Mammary epithelial cell (primary cell): ENCODE measurements at regions of chr17 and their contacts with region 1.

Region 1: GRCh38 chr17:82668631-82669099 is 20.4 kb upstream of the WDR45B start:
- DNase-seq: peak; percentile 37
- H3K4me3 ChIP-seq: no peak overlapping the region
- H3K27ac ChIP-seq: no peak overlapping the region
- H3K4me1 ChIP-seq: no peaks in the 10 kb centered on the region
- H3K27me3 ChIP-seq: no peaks in the 10 kb centered on the region
- CTCF ChIP-seq: peak; percentile 46 to 74

Region 2: GRCh38 chr17:82592767-82593589 is 75.7 kb before region 1 on chr17:
- CTCF ChIA-PET with region 1: no interaction called
- dilution Hi-C with region 1: no loop called
- in situ Hi-C with region 1: no loop called
- intact Hi-C with region 1: no loop called
- DNase-seq: peak; percentile 68
- H3K4me3 ChIP-seq: peak overlapping the region; percentile 57 to 64 (median 63)
- H3K27ac ChIP-seq: peak overlapping the region; percentile 11
- H3K4me1 ChIP-seq: peaks cover 16% of the 10 kb centered on the region
- H3K27me3 ChIP-seq: no peaks in the 10 kb centered on the region
- CTCF ChIP-seq: no peak

Region 3: GRCh38 chr17:82734987-82735866 is 66.6 kb after region 1 on chr17 and contains the start of gene FN3K:
- CTCF ChIA-PET with region 1: no interaction called
- dilution Hi-C with region 1: loop called (anchors 5 kb)
- in situ Hi-C with region 1: no loop called
- intact Hi-C with region 1: no loop called
- DNase-seq: peak; percentile 29
- H3K4me3 ChIP-seq: peak within 1 kb of the TSS; percentile 50 to 56 (median 52)
- H3K27ac ChIP-seq: no peak within 1 kb of the TSS
- H3K4me1 ChIP-seq: peaks cover 7% of the 10 kb centered on the region
- H3K27me3 ChIP-seq: no peaks in the 10 kb centered on the region
- CTCF ChIP-seq: no peak
- total RNA-seq, gene FN3K: 2.2 to 4.2 TPM

Region 4: GRCh38 chr17:82767041-82767754 is 98.5 kb after region 1 on chr17:
- CTCF ChIA-PET with region 1: no interaction called
- dilution Hi-C with region 1: loop called (anchors 5 kb)
- in situ Hi-C with region 1: no loop called
- intact Hi-C with region 1: loop called (anchors 1 kb)
- DNase-seq: peak; percentile 30
- H3K4me3 ChIP-seq: no peak overlapping the region
- H3K27ac ChIP-seq: no peak overlapping the region
- H3K4me1 ChIP-seq: no peaks in the 10 kb centered on the region
- H3K27me3 ChIP-seq: no peaks in the 10 kb centered on the region
- CTCF ChIP-seq: peak; percentile 67 to 70

Region 5: GRCh38 chr17:82775001-82775823 is 106.5 kb after region 1 on chr17:
- CTCF ChIA-PET with region 1: no interaction called
- dilution Hi-C with region 1: no loop called
- in situ Hi-C with region 1: no loop called
- intact Hi-C with region 1: loop called (anchors 2 kb)
- DNase-seq: no peak
- H3K4me3 ChIP-seq: peak overlapping the region in 1 of 3 experiments; percentile 29
- H3K27ac ChIP-seq: no peak overlapping the region
- H3K4me1 ChIP-seq: no peaks in the 10 kb centered on the region
- H3K27me3 ChIP-seq: no peaks in the 10 kb centered on the region
- CTCF ChIP-seq: peak; percentile 68 to 92

Region 6: GRCh38 chr17:82830249-82830661 is 161.6 kb after region 1 on chr17:
- CTCF ChIA-PET with region 1: no interaction called
- dilution Hi-C with region 1: loop called (anchors 5 kb)
- in situ Hi-C with region 1: no loop called
- intact Hi-C with region 1: no loop called
- DNase-seq: no peak
- H3K4me3 ChIP-seq: no peak overlapping the region
- H3K27ac ChIP-seq: no peak overlapping the region
- H3K4me1 ChIP-seq: peaks cover 12% of the 10 kb centered on the region
- H3K27me3 ChIP-seq: no peaks in the 10 kb centered on the region
- CTCF ChIP-seq: no peak

Region 7: DNA sequence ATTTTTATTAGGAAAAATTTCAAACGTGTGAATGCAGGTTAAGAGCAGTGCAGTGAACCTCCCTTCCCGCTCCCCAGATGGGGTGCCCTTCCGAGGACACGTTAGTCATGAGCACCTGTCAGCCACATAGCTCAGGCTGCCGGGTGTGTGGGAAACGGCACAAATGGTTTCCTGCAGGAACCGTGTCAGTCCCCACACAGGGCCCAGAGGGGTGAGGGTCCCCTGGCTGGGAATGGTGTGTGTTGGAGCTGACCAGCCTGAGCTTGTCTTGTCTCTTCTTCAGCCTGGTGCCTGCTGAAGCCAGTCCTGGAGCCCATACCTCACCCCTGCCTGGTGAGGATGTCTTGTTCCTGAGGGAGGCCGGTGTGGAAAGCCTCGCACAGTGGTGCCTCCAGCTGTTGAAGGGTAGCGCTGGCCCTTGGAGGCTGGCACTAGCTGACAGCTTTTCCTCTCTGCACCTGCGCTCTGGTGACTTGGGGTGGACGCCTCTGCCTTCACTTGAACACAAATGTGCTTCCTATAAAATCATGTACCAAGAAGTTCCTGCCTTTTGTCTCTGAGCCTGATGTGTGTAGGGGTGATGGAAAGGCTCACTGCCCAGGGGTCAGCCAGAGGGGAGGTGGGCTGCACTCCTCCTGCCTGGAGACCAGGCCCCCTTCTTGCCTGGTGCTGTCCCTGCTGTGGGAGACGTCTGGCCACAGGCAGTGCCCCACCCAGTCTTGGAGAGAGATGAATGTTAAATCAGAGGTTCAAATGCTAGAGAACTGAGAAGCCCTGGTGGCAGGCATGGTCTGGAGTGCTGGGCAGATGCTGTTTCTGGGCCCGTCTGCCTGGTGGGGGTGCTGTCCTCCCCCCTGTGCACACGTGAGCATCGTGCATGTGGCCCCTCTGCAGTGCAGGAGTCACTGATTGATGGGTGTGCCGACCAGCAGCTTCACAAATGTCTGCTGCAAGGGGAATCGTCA is 273.8 kb after region 1 on chr17:
- CTCF ChIA-PET with region 1: no interaction called
- dilution Hi-C with region 1: loop called (anchors 5 kb)
- in situ Hi-C with region 1: no loop called
- intact Hi-C with region 1: no loop called
- DNase-seq: no peak
- H3K4me3 ChIP-seq: no peak overlapping the region
- H3K27ac ChIP-seq: no peak overlapping the region
- H3K4me1 ChIP-seq: no peaks in the 10 kb centered on the region
- H3K27me3 ChIP-seq: no peaks in the 10 kb centered on the region
- CTCF ChIP-seq: no peak